Activated CD8-positive, alpha-beta T cell treated with anti-CD3 and anti-CD28 coated beads for 36 hours (primary cell): ENCODE measurements at regions of chrX and their contacts with region 1.

Region 1: DNA sequence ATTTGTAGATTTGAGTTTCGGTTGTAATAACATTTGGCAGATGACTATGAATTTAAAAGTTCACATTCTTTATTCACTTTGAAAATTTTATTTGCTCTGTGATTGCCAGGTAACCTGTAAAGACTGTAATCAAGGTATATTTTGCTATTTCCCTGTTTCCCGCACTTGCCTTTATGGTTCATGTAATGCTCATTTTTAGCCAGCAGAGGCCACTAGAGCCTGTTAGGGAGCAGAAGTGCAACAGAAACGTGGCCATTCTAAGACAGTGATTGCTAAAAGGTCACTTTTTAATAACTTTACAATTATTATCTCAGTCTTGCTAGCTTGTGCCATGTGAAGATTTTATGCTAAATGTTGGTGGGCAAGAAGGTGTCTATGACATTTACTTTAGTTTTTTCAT is 12.4 kb downstream of the YIPF6 start:
- DNase-seq: peak; percentile 28
- ATAC-seq: peak; percentile 70
- H3K4me3 Mint-ChIP-seq: no peak overlapping the region
- H3K27ac Mint-ChIP-seq: no peak overlapping the region
- H3K4me1 Mint-ChIP-seq: peaks cover 22% of the 10 kb centered on the region
- H3K27me3 Mint-ChIP-seq: no peaks in the 10 kb centered on the region
- CTCF ChIP-seq: peak; percentile 55

Region 2: DNA sequence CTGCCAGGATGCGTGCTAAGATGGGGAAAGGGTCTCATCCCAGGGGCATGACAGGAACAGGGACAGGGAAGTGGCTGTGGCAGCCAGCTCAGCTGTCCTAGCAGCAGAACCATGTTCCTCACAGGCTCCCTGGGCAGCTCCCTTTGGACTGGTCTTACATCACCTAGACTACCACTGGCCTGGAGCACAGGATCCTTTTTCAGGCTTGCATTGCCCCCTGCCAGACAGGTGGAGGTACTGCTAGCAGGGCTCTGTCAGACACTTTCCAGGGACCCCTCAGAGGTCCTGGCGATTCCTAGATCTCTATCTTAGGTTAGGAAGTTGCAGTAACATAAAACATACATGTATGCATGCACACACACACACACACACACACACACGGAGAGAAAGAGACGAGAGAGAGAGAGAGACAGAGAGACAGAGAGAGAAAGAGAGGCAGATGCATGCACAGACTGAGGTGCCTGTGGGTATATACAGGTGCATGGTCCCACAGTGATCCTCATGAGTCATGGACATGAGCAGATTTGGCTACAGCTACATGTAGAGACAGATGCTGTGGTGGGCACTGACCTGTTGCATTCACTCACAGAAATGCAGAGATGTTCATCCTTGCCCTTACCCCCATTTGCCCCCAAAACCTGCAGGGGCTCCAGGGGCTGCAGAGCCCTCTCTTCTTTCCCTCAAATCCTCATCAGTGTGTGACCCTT is 199.8 kb after region 1 on chrX:
- CTCF ChIA-PET with region 1: interaction called, 10 read pairs
- POLR2A ChIA-PET with region 1: no interaction called
- intact Hi-C with region 1: loop called (anchors 10 kb)
- DNase-seq: peak; percentile 30
- ATAC-seq: peak; percentile 60
- H3K4me3 Mint-ChIP-seq: no peak overlapping the region
- H3K27ac Mint-ChIP-seq: no peak overlapping the region
- H3K4me1 Mint-ChIP-seq: no peaks in the 10 kb centered on the region
- H3K27me3 Mint-ChIP-seq: no peaks in the 10 kb centered on the region
- CTCF ChIP-seq: peak; percentile 45